HEK293 (cell line): ENCODE measurements at regions of chr6 and their contacts with region 1.

Region 1: DNA sequence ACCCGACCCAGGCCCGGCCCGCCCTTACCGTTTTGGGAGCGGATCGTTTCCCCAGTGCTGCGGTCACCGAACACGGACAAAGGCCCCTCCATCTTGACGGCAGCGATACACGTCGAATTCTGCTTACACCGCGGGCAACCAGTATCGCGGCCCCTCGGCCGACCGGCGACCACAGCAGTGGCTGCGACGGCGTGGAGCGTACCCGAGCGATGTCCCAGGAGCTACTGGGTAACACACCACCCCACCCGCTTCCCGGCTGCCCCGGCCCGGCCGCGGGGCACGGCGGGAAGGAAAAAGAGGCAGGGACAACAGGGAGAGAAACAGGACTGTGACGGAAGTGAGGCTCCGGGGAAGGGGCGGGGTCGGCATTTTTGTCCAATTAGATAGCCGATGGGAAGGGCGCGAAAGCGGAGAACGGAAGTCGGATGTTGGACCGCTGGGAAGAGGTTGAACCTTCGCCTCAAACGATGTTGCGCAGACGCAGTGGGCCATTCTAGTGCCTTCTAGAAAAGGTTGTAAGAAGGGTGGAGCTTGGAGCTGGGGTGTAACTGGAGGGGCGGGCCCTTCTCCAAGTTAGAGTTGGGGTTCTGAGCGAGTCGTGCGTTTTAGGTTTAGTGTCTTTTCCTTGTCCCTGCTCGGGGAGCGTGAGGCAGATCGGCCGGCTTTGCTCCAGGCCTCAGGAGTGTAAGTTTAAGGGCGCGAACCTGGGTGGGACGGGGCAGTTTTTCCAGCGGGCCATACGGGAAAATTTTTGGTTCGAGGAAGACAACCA is at the start of gene TCP1:
- H3K4me3 ChIP-seq: peak within 1 kb of the TSS; percentile 98
- H3K27ac ChIP-seq: peak within 1 kb of the TSS; percentile 66
- H3K4me1 ChIP-seq: peaks cover 8% of the 10 kb centered on the region
- CTCF ChIP-seq: no peak

Region 2: GRCh38 chr6:159693128-159693893 is 96.3 kb before region 1 on chr6 and contains the start of gene SOD2:
- CTCF ChIA-PET with region 1: interaction called, 17 read pairs
- POLR2A ChIA-PET with region 1: interaction called, 32 read pairs
- H3K4me3 ChIP-seq: peak within 1 kb of the TSS; percentile 85
- H3K27ac ChIP-seq: peak within 1 kb of the TSS; percentile 89
- H3K4me1 ChIP-seq: no peaks in the 10 kb centered on the region; the same call in 1 of the 2 replicates
- CTCF ChIP-seq: peak; percentile 12; the same call in 1 of the 2 replicates

Region 3: DNA sequence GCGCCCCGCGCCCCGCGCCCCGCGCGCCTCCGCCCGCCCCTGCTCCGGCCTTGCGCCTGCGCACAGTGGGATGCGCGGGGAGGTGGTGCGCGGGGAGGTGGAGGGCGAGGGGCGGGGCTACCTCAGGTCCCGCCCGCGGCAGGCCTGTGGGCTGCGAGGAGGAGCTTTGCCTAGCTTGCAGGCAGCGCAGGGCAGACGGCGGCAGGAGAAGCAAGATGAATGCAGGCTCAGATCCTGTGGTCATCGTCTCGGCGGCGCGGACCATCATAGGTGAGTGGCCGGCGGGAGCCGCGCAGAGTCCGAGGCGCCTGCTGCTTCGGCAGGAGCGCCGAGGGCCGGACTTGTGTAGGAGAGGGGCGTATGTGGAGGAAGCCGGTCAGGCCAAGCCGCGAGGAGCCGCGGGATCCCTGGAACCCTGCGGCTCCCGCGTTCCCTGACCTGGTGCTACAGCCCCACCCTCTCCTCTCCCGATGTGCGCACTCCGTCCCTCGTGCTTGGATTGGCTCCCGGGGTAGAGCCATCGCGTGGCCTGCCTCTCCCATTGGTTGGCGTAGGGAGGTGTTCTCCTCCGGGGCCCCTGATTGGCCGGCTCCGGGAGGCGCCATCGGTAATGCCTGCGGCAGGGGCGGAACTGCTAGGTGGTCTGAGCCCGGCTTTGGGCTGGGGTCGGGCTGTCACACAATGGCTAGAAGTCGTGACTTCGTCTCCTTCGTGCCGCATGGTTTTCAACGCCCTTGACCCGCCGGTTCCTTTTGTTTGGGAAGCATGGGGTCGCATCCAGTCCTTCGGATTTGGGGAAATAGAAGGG is 27.5 kb before region 1 on chr6 and contains the start of gene ACAT2:
- CTCF ChIA-PET with region 1: interaction called, 4 read pairs
- POLR2A ChIA-PET with region 1: interaction called, 88 read pairs
- H3K4me3 ChIP-seq: peak within 1 kb of the TSS; percentile 64
- H3K27ac ChIP-seq: peak within 1 kb of the TSS; percentile 95
- H3K4me1 ChIP-seq: no peaks in the 10 kb centered on the region
- CTCF ChIP-seq: peak; percentile 46; the same call in 1 of the 2 replicates

Region 4: DNA sequence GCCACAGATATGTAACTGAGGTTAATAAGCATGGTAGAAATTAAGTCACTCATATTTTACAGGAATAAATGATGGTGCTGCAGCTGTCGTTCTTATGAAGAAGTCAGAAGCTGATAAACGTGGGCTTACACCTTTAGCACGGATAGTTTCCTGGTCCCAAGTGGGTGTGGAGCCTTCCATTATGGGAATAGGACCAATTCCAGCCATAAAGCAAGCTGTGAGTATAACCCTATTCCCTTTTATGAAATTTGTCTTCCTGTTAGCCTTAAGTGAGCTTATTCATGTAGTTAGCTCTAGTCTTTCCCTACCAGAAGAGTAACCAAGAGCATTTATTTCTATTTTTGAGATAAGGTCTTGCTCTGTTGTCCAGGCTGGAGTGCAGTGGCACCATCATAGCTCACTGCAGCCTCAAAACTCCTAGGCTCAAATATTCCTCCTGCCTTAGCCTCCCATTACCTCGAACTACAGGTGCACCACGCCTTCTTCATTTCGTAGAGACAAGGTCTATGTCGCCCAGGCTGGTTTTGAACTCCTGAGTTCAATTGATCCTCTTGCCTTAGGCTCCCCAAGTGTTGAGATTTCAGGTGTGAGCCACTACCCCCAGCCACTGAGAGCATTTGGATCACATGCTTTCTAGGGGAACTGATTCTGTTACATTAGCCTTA is 12.2 kb before region 1 on chr6:
- CTCF ChIA-PET with region 1: interaction called, 4 read pairs
- POLR2A ChIA-PET with region 1: interaction called, 75 read pairs
- H3K4me3 ChIP-seq: no peak overlapping the region
- H3K27ac ChIP-seq: no peak overlapping the region
- H3K4me1 ChIP-seq: no peaks in the 10 kb centered on the region
- CTCF ChIP-seq: no peak

Region 5: GRCh38 chr6:159806021-159806458 is 16.5 kb after region 1 on chr6:
- CTCF ChIA-PET with region 1: no interaction called
- POLR2A ChIA-PET with region 1: interaction called, 47 read pairs
- H3K4me3 ChIP-seq: no peak overlapping the region
- H3K27ac ChIP-seq: no peak overlapping the region
- H3K4me1 ChIP-seq: peaks cover 4% of the 10 kb centered on the region
- CTCF ChIP-seq: no peak